HEK293T (cell line): ENCODE measurements at regions of chr6 and their contacts with region 1.

Region 1: DNA sequence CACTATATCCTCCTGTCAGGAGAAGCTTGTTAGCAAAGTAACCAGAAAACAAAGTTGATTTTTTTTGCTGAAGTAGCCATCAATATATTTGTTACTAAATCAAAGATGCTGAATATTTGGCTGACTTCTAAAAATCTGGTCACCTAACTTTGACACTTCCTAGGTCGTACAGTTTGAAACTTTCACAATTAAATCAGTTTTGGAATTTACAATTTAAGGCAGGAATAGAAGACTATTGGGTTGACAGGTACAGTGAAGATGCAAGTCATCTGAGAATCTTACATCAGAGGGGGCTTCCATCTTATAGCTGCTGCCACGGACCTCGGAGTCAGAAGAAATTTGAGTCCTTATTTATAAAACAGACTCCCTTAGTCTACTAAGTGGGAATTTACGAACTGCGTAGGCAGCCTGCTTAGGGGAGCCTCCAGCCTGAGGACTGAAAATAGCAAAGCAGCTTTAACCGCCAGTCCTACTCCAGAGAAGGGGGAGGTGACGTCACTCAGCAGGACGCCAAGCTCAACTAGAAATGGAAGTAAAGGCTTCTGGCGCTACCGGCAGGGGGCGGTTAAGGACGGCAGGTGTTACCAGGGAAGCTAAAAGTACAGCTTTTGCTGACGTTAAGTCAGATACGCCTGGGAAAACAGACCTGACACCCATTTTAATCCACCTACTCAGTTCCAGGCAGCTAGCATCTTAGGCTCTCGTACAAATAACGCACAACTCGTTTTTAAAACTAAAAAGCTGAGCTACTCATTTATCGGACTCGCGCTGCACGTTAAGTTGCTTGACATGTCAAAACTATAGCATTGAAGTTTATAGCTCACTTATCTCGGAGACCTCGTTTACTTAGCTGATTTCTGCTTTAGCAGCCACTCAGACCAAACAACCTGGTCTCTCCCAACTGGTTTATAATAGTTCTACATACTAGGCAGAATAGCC is 61.1 kb upstream of the HFE start:
- DNase-seq: peak; percentile 55

Region 2: GRCh38 chr6:25952535-25952934 is 73.6 kb before region 1 on chr6:
- CTCF ChIA-PET with region 1: no interaction called
- POLR2A ChIA-PET with region 1: no interaction called
- DNase-seq: no peak

Region 3: GRCh38 chr6:25992413-25993037 is 33.6 kb before region 1 on chr6:
- CTCF ChIA-PET with region 1: interaction called, 7 read pairs
- POLR2A ChIA-PET with region 1: interaction called, 58 read pairs
- DNase-seq: peak; percentile 88

Region 4: GRCh38 chr6:26003102-26003694 is 23.0 kb before region 1 on chr6:
- CTCF ChIA-PET with region 1: interaction called, 3 read pairs
- POLR2A ChIA-PET with region 1: interaction called, 19 read pairs
- DNase-seq: peak; percentile 60

Region 5: DNA sequence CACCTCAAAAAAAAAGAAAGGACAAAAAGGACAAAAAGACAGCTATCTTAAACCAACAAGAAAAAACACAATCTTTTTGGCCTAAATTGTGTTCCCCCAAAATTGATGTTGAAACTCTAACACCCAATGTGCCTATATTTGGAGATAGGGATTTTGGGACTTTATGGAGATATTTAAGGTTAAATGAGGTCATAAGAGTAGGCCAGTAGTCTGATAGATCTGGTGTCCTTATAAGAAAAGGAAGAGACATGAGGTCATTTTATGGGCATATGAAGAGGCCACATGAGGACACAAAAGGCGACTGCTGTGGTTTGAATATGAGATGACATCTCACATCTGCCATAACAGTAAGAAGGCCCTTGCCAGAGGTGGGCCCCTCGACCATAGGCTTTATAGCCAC is 14.1 kb before region 1 on chr6:
- CTCF ChIA-PET with region 1: no interaction called
- POLR2A ChIA-PET with region 1: interaction called, 54 read pairs
- DNase-seq: no peak

Region 6: DNA sequence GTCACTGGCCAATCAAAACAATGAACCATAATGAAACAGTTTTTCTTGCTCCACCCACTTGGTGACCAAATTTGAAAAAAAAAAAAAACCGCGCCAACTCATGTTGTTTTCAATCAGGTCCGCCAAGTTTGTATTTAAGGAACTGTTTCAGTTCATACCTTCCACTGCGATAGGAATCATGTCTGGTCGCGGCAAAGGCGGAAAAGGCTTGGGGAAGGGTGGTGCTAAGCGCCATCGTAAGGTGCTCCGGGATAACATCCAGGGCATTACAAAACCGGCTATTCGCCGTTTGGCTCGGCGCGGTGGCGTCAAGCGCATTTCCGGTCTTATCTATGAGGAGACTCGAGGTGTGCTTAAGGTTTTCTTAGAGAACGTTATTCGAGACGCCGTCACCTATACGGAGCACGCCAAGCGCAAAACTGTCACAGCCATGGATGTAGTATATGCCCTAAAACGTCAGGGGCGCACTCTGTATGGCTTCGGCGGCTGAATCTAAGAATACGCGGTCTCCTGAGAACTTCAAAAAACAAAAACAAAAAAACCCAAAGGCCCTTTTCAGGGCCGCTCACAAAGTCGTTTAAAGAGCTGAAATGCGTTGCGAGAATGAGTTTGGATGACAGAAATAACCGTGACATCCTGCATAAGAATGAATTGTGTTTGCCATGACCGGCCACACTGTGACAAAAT is 77.8 kb after region 1 on chr6:
- CTCF ChIA-PET with region 1: interaction called, 4 read pairs
- POLR2A ChIA-PET with region 1: interaction called, 41 read pairs
- DNase-seq: peak; percentile 70